PC-3 (cell line): ENCODE measurements at regions of chr14 and their contacts with region 1.

Region 1: GRCh38 chr14:50396631-50397390 is at the start of gene CDKL1:
- DNase-seq: peak; percentile 85
- ATAC-seq: peak; percentile 82
- H3K4me3 ChIP-seq: peak within 1 kb of the TSS; percentile 82
- H3K27ac ChIP-seq: peak within 1 kb of the TSS; percentile 85
- H3K4me1 ChIP-seq: peaks cover 34% of the 10 kb centered on the region
- H3K27me3 ChIP-seq: no peaks in the 10 kb centered on the region
- CTCF ChIP-seq: no peak
- total RNA-seq, gene CDKL1: 7.1 and 14.4 TPM in 2 replicates

Region 2: DNA sequence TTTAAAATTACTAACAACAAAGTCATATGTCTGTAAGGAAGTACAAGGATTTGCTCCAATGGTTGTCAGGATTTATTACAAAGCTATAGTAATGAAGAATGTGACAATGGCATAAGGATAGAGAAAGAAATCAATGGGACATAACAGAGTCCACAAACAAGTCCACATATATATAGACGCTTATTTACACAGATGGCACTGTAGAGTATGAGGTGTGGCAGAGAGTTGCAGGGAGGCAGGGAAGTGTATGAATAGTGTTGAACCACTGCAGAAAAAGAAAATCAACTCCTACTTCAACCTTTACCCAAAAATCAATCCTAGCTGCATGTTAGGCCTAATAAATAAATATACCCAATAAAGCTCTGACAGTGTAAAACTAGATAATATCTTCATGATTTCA is 186.7 kb before region 1 on chr14:
- CTCF ChIA-PET with region 1: no interaction called
- POLR2A ChIA-PET with region 1: no interaction called
- intact Hi-C with region 1: no loop called
- DNase-seq: no peak
- ATAC-seq: peak; percentile 38; the same call in 1 of the 2 replicates
- H3K4me3 ChIP-seq: no peak overlapping the region
- H3K27ac ChIP-seq: no peak overlapping the region
- H3K4me1 ChIP-seq: no peaks in the 10 kb centered on the region
- H3K27me3 ChIP-seq: no peaks in the 10 kb centered on the region
- CTCF ChIP-seq: no peak

Region 3: DNA sequence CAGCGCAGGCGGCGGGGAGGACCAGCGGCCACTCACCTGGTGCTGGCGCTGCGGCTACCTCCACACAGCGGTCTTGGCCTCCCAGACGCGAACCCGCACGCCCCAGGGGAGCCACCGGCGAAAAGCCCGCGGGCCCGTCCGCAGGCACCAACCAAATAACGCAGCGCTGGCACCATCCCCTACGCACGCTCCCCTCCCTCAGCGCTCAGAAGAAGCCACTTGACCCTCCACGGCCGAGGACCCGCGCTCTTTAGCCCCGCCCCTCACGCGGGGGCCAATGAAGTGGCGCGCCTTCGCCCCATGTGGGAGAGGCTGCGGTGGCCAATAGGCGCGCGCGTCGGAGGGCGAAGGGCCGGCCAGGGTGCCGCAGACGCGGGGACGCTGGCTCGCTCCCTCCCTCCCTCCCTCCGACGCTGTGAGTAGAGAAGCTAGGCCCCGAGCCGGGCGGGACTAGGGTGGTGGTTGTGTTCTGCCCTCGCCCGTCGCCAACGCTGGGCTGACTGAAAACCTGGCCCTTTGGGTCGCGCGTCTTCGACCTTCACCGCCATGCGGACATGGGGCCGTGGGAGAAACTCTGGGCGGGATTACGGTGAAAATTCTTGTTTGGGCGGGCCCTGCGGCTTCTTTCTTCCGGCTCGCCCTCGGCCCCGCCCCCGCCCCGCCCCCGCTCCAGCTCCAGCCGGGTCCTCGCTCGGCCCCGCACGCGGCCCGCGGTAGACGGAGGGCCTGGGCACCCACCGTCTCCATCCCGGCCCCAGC is 84.7 kb before region 1 on chr14 and contains the starts of genes DMAC2L and L2HGDH:
- CTCF ChIA-PET with region 1: interaction called, 3 read pairs
- POLR2A ChIA-PET with region 1: interaction called, 10 read pairs
- intact Hi-C with region 1: no loop called
- DNase-seq: peak; percentile 98
- ATAC-seq: peak; percentile 91
- H3K4me3 ChIP-seq: peak within 1 kb of the TSS; percentile 93
- H3K27ac ChIP-seq: peak within 1 kb of the TSS; percentile 77
- H3K4me1 ChIP-seq: peaks cover 18% of the 10 kb centered on the region
- H3K27me3 ChIP-seq: no peaks in the 10 kb centered on the region
- CTCF ChIP-seq: peak; percentile 20
- total RNA-seq, gene DMAC2L: 2.3 and 18.1 TPM in 2 replicates
- total RNA-seq, gene L2HGDH: 27.8 and 41.6 TPM in 2 replicates

Region 4: DNA sequence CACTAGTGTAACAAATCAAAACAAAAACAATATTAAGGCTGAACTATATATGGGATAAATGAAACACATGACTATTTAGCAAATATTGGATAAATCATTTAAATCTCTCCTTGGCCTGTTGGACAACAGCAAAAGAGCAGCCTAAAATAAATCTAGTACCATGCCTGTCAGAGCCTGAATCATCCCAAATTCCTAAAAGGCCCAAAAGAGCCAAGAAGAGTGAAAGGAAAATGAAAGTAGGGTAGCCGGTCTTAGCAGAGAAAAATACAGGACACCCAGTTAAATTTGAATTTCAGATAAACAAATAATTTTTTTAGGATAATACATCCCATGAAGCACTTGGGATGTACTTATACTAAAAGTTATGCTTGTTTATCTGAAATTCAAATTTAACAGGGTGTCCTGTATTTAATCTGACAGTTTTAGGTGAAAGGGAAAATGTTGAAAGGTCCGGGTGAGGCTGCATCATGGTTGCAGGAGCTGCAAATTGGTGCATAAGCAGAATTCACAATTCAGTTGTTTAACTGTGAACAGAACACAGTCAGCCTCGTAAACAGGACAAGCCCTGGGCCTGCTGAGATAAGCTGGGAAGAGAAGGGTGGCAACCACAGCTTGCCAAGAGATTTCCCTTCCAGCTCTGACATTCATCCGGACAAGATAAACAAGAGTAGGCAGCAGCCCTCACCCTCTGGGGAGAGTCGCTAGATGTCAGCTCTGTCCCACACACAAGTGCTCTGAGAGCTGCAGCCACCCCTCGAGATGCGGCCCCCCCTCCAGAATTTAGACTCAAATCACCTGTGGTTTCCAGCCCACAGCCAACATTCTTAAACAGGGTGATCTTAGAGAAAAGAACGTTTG is 54.4 kb before region 1 on chr14:
- CTCF ChIA-PET with region 1: no interaction called
- POLR2A ChIA-PET with region 1: no interaction called
- intact Hi-C with region 1: loop called (anchors 5 kb)
- DNase-seq: peak; percentile 86
- ATAC-seq: peak; percentile 95
- H3K4me3 ChIP-seq: peak overlapping the region; percentile 13; the same call in 1 of the 2 replicates
- H3K27ac ChIP-seq: no peak overlapping the region
- H3K4me1 ChIP-seq: peaks cover 22% of the 10 kb centered on the region
- H3K27me3 ChIP-seq: no peaks in the 10 kb centered on the region
- CTCF ChIP-seq: peak; percentile 72

Region 5: GRCh38 chr14:50360851-50361250 is 36.0 kb before region 1 on chr14:
- CTCF ChIA-PET with region 1: no interaction called
- POLR2A ChIA-PET with region 1: interaction called, 5 read pairs
- intact Hi-C with region 1: loop called (anchors 2 kb)
- DNase-seq: peak; percentile 86
- ATAC-seq: peak; percentile 81
- H3K4me3 ChIP-seq: no peak overlapping the region
- H3K27ac ChIP-seq: peak overlapping the region; percentile 53
- H3K4me1 ChIP-seq: peaks cover 20% of the 10 kb centered on the region
- H3K27me3 ChIP-seq: no peaks in the 10 kb centered on the region
- CTCF ChIP-seq: no peak

Region 6: DNA sequence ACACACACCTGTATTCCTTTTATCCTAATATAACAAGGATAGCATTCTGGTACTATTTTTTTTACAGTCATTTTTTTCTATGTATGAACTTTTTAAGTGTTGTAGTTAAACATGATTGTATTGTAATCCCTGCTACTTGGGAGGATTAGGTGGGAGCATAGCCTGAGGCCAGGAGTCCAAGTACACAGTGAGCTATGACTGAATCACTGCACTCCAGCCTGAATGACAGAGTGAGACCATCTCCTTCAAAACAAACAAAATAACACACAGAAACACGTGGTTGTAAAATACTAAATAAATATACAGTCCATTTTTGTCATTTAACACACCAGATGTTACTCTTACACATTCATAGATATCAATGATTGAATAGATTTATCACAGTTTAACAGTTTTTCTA is 78.7 kb after region 1 on chr14:
- CTCF ChIA-PET with region 1: no interaction called
- POLR2A ChIA-PET with region 1: no interaction called
- intact Hi-C with region 1: loop called (anchors 2 kb)
- DNase-seq: peak; percentile 95
- ATAC-seq: peak; percentile 100
- H3K4me3 ChIP-seq: no peak overlapping the region
- H3K27ac ChIP-seq: peak overlapping the region; percentile 26
- H3K4me1 ChIP-seq: peaks cover 11% of the 10 kb centered on the region; the same call in 1 of the 2 replicates
- H3K27me3 ChIP-seq: no peaks in the 10 kb centered on the region
- CTCF ChIP-seq: no peak

Region 7: GRCh38 chr14:50542941-50543418 is 146.2 kb after region 1 on chr14:
- CTCF ChIA-PET with region 1: interaction called, 12 read pairs
- POLR2A ChIA-PET with region 1: no interaction called
- intact Hi-C with region 1: no loop called
- DNase-seq: peak; percentile 87
- ATAC-seq: peak; percentile 82
- H3K4me3 ChIP-seq: no peak overlapping the region
- H3K27ac ChIP-seq: no peak overlapping the region
- H3K4me1 ChIP-seq: peaks cover 16% of the 10 kb centered on the region
- H3K27me3 ChIP-seq: no peaks in the 10 kb centered on the region
- CTCF ChIP-seq: peak; percentile 91